PC-9 (cell line): ENCODE measurements at regions of chr6 and their contacts with region 1.

Region 1: DNA sequence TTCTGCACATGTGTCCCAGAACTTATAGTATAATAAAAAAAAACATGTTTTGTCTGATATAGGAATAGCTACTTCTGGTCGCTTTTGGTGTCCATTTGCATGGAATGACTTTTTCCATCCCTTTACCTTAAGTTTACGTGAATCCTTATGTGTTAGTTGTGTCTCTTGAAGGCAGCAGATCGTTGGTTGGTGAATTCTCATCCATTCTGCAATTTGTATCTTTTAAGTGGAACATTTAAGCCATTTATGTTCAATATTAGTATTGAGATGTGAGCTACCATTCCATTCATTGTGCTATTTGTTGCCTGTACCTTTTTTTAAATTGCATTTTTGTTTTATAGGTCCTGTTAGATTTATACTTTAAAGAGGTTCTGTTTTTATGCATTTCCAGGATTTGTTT is 55.1 kb upstream of the PHIP start:
- DNase-seq: no peak
- H3K4me3 ChIP-seq: no peak overlapping the region
- H3K27ac ChIP-seq: no peak overlapping the region
- H3K4me1 ChIP-seq: no peaks in the 10 kb centered on the region
- H3K27me3 ChIP-seq: no peaks in the 10 kb centered on the region
- CTCF ChIP-seq: no peak

Region 2: DNA sequence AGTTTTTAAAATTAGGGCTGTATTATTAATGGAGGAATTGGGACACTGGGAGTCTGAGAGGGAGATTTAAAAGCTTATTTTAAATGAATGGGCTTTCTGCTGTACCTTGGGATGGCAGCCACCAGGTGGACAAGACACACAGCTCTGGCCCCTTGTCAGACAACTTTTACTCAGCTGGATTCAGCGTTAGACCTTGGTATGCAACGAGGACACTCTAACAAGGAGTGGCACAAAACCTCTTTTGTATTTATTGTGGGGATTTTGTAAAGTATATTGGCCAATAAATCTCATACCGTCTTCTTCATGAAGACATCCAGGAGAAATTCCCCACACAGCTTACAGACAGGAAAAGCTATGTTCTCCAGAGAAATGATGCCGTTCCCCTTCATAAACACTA is 298.4 kb after region 1 on chr6:
- CTCF ChIA-PET with region 1: interaction called, 13 read pairs
- POLR2A ChIA-PET with region 1: no interaction called
- intact Hi-C with region 1: no loop called
- DNase-seq: no peak
- H3K4me3 ChIP-seq: no peak overlapping the region
- H3K27ac ChIP-seq: no peak overlapping the region
- H3K4me1 ChIP-seq: no peaks in the 10 kb centered on the region
- H3K27me3 ChIP-seq: no peaks in the 10 kb centered on the region
- CTCF ChIP-seq: no peak